Left colon (tissue), 2 donors: ENCODE measurements at regions of chr3 and their contacts with region 1.

Region 1: DNA sequence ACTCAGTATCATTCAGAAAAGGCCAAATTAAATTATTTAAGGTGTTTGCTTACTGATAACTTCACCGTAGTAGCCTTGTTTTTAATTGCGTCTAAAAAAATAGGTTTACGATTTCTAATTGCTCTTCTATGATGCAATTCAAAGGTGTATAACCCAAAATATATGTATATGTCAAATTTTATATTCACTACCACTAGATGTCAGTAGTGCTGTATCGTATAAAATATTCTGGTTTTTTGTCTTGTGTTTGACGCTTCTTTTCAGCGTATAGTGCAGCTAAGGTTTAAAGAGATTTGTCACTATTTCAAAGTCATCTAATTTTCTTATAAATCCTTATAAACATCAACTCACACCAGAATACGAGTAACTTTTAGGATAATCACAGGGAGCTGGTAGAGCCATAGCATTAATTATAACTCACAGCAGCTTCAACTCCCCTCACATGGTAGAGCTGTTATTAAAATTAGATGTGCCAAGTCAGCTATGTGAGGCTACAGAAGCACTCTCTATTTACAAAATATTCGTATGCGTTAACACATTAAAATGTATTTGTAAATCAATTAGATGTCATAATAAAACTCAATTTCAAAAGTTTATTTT is 3.5 kb downstream of the PFN2 start:
- DNase-seq: no peak
- ATAC-seq: no peak

Region 2: GRCh38 chr3:150183678-150184425 is 216.7 kb after region 1 on chr3:
- intact Hi-C with region 1: loop called in 1 of 2 experiments (anchors 2 kb)
- DNase-seq: peak; percentile 30 to 60
- ATAC-seq: peak; percentile 89